GM10248 (cell line): ENCODE measurements at regions of chr4 and their contacts with region 1.

Region 1: GRCh38 chr4:139295206-139295941 is 5.9 kb upstream of the NAA15 start:
- DNase-seq: peak; percentile 89
- CTCF ChIP-seq: peak; percentile 98

Region 2: GRCh38 chr4:139188648-139189416 is 106.5 kb before region 1 on chr4:
- CTCF ChIA-PET with region 1: interaction called, 13 read pairs
- POLR2A ChIA-PET with region 1: interaction called, 5 read pairs
- DNase-seq: no peak
- CTCF ChIP-seq: no peak

Region 3: DNA sequence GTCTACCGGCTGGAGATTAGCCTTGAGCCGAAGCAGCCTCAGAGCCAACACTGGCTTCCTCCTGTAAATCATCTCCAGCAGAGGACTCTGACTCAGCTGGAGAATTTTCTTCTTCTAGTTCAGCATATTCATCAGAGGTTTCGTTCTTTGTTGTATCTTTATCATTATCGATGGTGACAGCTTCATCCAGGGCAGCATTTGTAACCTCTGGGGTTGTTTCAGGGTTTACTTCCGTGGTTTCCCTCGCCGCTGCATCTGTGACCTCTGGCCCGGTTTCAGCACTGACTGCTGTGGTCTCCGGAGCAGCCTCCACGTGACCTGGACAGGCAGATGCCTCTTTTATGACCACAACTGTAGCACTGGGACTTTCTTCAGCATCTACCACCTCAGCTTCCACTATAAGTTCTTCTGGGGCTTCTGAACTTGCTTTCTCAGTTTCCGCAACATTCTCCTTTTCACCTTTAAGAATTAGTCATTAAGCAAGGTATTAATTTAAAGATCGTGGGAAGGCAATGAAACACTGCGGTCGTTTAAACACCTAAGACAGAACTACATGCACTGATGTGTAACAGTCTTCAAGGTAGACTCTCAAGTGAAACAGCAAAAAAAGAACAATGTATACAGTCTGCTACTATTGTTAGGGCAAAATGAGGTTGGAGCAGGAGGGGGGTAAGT is 28.7 kb before region 1 on chr4:
- CTCF ChIA-PET with region 1: interaction called, 16 read pairs
- POLR2A ChIA-PET with region 1: no interaction called
- DNase-seq: peak; percentile 88
- CTCF ChIP-seq: no peak

Region 4: DNA sequence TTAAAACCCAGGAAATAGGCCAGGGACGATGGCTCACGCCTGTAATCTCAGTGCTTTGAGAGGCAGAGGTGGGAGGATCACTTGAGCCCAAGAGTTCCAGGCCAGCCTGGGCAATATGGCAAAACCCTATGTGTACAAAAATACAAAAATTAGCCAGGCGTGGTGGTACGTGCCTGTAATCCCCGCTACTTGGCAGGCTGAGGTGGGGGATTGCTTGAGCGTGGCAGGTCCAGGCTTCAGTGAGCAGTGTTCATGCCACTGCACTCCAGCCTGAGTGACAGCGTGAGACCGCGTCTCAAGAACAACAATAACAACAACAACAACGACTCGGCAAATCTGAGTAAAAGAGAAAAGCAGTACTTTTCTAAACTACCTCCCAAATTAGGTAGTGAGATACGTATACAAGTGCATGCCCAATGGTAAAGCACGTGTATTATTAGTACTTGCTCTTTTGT is 19.9 kb after region 1 on chr4:
- CTCF ChIA-PET with region 1: interaction called, 17 read pairs
- POLR2A ChIA-PET with region 1: no interaction called
- DNase-seq: peak; percentile 39
- CTCF ChIP-seq: no peak